Gastrocnemius medialis (tissue), 4 donors: ENCODE measurements at regions of chr1 and their contacts with region 1.

Region 1: GRCh38 chr1:226062558-226063223 is at the start of gene H3-3A:
- DNase-seq: peak; percentile 97 to 98
- ATAC-seq: peak; percentile 76
- H3K4me3 ChIP-seq: peak within 1 kb of the TSS; percentile 73 to 92 (median 78)
- H3K27ac ChIP-seq: peak within 1 kb of the TSS; percentile 94 to 99 (median 98)
- H3K4me1 ChIP-seq: peaks cover 31% of the 10 kb centered on the region in 2 donors
- H3K27me3 ChIP-seq: no peaks in the 10 kb centered on the region
- CTCF ChIP-seq: peak in 2 of 5 experiments; percentile 22 to 30
- POLR2A ChIP-seq: peak; percentile 97 to 99
- total RNA-seq, gene H3-3A: 163 to 289 (median 191) TPM

Region 2: DNA sequence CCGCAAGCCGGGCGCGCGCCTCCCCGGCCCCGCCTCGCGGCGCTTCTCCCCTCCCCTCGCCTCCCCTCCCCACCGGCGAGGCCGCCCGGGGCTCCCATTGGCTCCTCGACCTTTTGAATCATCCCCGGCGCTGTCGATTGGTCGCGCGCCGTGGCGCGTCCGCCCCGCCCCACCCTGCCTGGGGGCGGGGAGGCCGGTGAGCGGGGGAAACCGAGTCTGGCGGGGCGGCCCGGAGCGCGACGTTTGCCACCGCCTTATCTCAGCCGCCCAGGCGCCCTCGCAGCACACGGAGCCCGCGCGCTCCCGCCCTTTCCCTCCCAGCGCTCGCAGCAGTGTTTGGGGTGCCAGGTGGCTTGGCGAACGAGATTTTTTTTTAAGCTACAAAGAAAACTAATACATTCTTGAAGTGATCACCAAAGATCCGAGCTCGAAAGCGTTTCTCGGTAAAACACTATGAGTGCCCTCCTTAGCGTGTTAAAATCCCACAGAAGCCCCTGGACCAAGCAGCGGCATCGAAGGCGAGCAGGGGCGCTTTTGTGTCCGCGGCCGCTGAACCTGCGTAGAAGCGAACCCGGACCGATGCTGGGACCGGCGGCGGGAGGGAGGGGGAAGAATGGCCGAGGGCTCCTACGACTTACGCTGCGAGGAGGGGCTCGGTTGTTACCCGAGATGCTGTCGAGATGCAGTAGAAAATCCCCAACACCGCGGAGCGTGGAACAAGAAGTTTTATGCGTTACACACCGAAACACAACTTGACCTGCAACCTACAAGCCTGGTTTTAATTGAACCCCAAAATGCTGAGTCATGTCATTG is 634.4 kb before region 1 on chr1:
- in situ Hi-C with region 1: no loop called
- intact Hi-C with region 1: loop called (anchors 5 kb)
- DNase-seq: peak; percentile 89
- ATAC-seq: peak; percentile 91 to 93
- H3K4me3 ChIP-seq: peak overlapping the region; percentile 80 to 98 (median 96)
- H3K27ac ChIP-seq: peak overlapping the region; percentile 89 to 95 (median 92)
- H3K4me1 ChIP-seq: peaks cover 19 to 35% of the 10 kb centered on the region in 2 donors
- H3K27me3 ChIP-seq: no peaks in the 10 kb centered on the region
- CTCF ChIP-seq: no peak
- POLR2A ChIP-seq: peak; percentile 83 to 92

Region 3: DNA sequence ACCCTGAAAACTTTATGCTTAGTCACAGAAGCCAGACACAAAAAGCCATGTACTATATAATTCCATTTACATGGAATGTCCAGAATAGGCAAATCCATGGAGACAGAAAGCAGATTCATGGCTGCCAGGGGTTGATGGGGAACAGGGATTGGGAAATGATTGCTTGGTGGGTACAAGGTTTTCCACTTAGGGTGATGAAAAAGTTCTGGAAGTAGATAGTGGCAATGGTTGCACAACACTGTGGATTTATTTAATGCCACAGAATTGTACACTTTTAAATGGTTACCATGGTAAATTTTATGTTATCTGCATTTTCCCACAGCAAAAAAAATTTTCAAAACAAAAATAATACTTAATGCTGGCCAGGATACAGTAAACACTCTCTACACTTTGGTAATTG is 450.4 kb before region 1 on chr1:
- in situ Hi-C with region 1: no loop called
- intact Hi-C with region 1: no loop called
- DNase-seq: no peak
- ATAC-seq: no peak
- H3K4me3 ChIP-seq: no peak overlapping the region
- H3K27ac ChIP-seq: peak overlapping the region; percentile 0 to 56 (median 33)
- H3K4me1 ChIP-seq: peaks cover 21 to 27% of the 10 kb centered on the region in 2 donors
- H3K27me3 ChIP-seq: no peaks in the 10 kb centered on the region
- CTCF ChIP-seq: no peak
- POLR2A ChIP-seq: no peak

Region 4: GRCh38 chr1:225944951-225945350 is 117.7 kb before region 1 on chr1:
- in situ Hi-C with region 1: no loop called
- intact Hi-C with region 1: no loop called
- DNase-seq: no peak
- ATAC-seq: no peak
- H3K4me3 ChIP-seq: no peak overlapping the region
- H3K27ac ChIP-seq: no peak overlapping the region
- H3K4me1 ChIP-seq: peaks cover 0 to 8% of the 10 kb centered on the region in 2 donors
- H3K27me3 ChIP-seq: no peaks in the 10 kb centered on the region
- CTCF ChIP-seq: no peak
- POLR2A ChIP-seq: no peak

Region 5: DNA sequence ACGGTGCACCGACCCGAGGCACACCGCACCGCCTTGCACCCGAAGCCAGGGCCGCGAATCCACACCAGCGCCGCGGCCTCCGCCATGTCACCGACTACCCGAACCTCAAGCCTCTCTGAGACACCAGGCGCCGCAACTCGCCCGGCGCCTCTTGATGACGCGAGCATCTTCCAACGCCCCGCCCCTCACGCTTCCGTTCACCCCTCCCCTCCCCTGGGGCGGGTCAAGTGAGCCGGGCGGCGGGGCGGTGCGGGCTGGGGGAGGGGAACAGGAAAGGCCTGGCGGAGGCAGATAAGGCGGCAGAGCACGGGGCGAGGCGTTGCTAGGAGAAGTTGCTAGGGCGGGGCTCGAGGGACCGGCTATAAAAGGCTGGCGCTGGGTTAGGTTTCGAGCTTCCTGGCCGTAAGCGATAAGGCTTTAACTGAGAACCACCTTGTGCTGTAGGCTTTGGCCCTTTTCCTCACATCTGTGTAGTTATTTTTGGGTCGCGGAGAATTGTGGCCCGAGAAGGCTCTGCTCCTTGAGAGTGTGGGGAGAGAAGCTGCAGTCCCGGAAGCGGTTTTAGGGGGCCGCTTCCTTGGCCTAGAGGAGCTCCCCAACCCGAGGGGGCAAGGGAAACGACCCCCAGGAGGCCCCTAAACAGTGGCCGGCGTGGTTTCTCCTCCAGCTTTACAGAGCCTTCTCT is 63.3 kb before region 1 on chr1 and contains the start of gene SDE2:
- in situ Hi-C with region 1: loop called in 1 of 4 experiments (anchors 10 kb)
- intact Hi-C with region 1: loop called (anchors 1 kb)
- DNase-seq: peak; percentile 100
- ATAC-seq: peak; percentile 85 to 87
- H3K4me3 ChIP-seq: peak within 1 kb of the TSS; percentile 73 to 90 (median 79)
- H3K27ac ChIP-seq: peak within 1 kb of the TSS; percentile 92 to 98 (median 93)
- H3K4me1 ChIP-seq: peaks cover 31 to 41% of the 10 kb centered on the region in 2 donors
- H3K27me3 ChIP-seq: no peaks in the 10 kb centered on the region
- CTCF ChIP-seq: no peak
- POLR2A ChIP-seq: peak; percentile 93 to 95
- total RNA-seq, gene SDE2: 20.1 to 30.0 (median 23.0) TPM

Region 6: GRCh38 chr1:226109829-226110248 is 47.1 kb after region 1 on chr1:
- in situ Hi-C with region 1: loop called in 2 of 4 experiments (anchors 5 kb)
- intact Hi-C with region 1: loop called (anchors 1 kb)
- DNase-seq: peak; percentile 73 to 79
- ATAC-seq: peak; percentile 87 to 89
- H3K4me3 ChIP-seq: peak overlapping the region; percentile 66 to 92 (median 84)
- H3K27ac ChIP-seq: peak overlapping the region; percentile 93 to 98 (median 96)
- H3K4me1 ChIP-seq: peaks cover 23 to 24% of the 10 kb centered on the region in 2 donors
- H3K27me3 ChIP-seq: no peaks in the 10 kb centered on the region
- CTCF ChIP-seq: peak in 1 of 5 experiments; percentile 34
- POLR2A ChIP-seq: peak; percentile 57 to 66

Region 7: GRCh38 chr1:226186124-226187018 is 123.7 kb after region 1 on chr1 and contains the start of gene ACBD3:
- in situ Hi-C with region 1: loop called in 1 of 4 experiments (anchors 10 kb)
- intact Hi-C with region 1: loop called (anchors 2 kb)
- DNase-seq: peak; percentile 83 to 86
- ATAC-seq: peak; percentile 97 to 98
- H3K4me3 ChIP-seq: peak within 1 kb of the TSS; percentile 89 to 100 (median 94)
- H3K27ac ChIP-seq: peak within 1 kb of the TSS; percentile 89 to 97 (median 92)
- H3K4me1 ChIP-seq: peaks cover 27 to 42% of the 10 kb centered on the region in 2 donors
- H3K27me3 ChIP-seq: no peaks in the 10 kb centered on the region
- CTCF ChIP-seq: peak in 2 of 5 experiments; percentile 30 to 41
- POLR2A ChIP-seq: peak; percentile 83 to 95
- total RNA-seq, gene ACBD3: 31.1 to 43.9 (median 36.6) TPM